Activated CD4-positive, alpha-beta memory T cell treated with anti-CD3 and anti-CD28 coated beads for 36 hours (primary cell): ENCODE measurements at regions of chr13 and their contacts with region 1.

Region 1: DNA sequence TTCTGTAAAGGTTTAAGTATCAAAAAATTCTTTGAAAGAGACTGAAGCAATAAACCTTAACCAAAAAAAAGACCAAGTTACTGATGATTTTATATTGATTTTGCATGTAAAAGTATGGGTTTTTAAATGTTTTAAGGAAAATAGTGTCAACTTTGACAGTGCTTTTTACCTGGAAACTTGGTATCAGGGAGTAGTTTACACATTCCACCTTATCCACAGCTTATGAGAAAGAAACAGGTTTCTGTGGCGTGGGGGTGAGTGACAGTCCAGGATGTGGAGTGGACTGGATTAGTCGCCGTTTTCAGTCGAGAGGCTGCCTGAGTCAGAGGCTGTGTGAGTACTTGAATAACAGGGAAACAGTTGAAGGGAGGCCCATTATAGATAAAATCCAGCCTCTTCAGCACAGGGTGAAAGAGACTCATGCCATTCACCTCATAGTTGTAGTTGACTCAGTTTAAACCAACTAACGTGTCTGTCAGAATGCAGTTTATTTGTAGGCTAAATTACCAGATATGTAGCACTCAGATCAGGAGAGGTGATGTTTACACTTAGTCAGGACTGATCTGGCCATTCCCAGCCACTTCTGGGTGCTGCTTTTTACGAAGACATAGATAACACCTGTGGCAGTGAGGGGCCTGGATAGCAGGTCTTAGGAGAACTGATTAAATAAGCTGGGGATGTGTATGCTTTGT is 595 bp upstream of the GPR183 start:
- DNase-seq: peak; percentile 91
- H3K4me3 Mint-ChIP-seq: peak overlapping the region; percentile 93
- H3K27ac Mint-ChIP-seq: peak overlapping the region; percentile 99
- H3K4me1 Mint-ChIP-seq: peaks cover 72% of the 10 kb centered on the region
- H3K27me3 Mint-ChIP-seq: no peaks in the 10 kb centered on the region

Region 2: DNA sequence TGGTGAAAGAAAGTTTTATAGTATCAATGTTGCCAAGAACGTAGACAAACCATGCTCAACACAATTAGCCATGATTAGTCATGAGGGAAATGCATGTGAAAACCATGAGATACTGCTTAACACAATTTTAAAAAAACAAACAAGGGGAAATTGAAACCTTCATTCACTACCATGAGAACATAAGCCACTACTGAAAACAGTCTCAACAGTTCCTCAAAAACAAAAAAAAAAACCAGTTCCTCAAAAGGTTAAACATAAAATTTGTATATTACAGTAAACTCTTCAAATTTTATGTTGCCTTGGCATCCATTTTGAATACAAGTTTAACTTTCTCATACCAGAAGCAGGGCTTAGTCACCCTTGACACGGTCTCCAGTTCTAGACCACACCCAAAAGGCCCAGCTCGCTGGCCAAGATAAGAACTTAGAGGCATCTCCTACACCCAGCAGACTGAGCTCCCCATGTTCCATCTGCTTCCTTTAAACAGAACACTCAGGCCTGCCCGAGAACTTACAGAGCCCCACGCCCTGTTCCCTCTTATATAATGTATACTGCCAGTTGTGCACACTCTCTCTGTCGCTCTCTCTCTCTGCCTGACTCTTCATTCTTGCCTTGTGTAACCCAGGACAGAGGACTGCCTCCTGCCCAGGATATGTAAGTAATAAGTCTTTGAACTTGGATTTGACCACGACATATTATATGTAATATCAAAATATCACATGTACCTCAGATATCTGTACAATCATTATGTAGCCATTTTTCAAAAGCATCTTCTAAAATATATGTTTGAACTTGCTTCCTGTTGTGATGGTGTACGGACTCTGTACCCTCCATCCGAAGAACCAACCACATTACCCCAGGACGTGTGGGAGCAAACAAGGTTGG is 798.3 kb before region 1 on chr13:
- CTCF ChIA-PET with region 1: no interaction called
- POLR2A ChIA-PET with region 1: no interaction called
- intact Hi-C with region 1: loop called (anchors 10 kb)
- DNase-seq: peak; percentile 78
- H3K4me3 Mint-ChIP-seq: peak overlapping the region; percentile 33
- H3K27ac Mint-ChIP-seq: peak overlapping the region; percentile 95
- H3K4me1 Mint-ChIP-seq: peaks cover 95% of the 10 kb centered on the region
- H3K27me3 Mint-ChIP-seq: no peaks in the 10 kb centered on the region

Region 3: DNA sequence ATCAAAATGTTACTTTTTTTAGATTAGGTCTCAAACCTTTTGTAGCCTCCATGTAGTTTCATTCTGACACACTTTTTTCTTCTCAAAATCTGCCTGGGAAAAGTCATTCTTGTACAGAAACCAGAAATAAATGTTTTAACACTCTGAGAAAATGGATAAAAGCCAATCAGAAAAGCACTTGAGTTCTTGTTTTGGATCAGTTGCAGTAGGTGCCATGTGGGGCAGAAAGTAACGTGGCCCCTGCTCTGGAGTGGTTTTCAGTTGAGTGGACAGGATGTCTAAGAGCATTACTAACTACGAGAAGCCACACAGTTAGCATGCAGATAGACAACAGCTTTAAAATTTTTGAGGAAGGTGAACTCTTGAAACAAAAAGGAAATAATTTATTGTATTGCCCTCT is 19.7 kb before region 1 on chr13:
- CTCF ChIA-PET with region 1: no interaction called
- POLR2A ChIA-PET with region 1: interaction called, 18 read pairs
- intact Hi-C with region 1: loop called (anchors 2 kb)
- DNase-seq: peak; percentile 87
- H3K4me3 Mint-ChIP-seq: no peak overlapping the region
- H3K27ac Mint-ChIP-seq: peak overlapping the region; percentile 80
- H3K4me1 Mint-ChIP-seq: peaks cover 85% of the 10 kb centered on the region
- H3K27me3 Mint-ChIP-seq: no peaks in the 10 kb centered on the region

Region 4: DNA sequence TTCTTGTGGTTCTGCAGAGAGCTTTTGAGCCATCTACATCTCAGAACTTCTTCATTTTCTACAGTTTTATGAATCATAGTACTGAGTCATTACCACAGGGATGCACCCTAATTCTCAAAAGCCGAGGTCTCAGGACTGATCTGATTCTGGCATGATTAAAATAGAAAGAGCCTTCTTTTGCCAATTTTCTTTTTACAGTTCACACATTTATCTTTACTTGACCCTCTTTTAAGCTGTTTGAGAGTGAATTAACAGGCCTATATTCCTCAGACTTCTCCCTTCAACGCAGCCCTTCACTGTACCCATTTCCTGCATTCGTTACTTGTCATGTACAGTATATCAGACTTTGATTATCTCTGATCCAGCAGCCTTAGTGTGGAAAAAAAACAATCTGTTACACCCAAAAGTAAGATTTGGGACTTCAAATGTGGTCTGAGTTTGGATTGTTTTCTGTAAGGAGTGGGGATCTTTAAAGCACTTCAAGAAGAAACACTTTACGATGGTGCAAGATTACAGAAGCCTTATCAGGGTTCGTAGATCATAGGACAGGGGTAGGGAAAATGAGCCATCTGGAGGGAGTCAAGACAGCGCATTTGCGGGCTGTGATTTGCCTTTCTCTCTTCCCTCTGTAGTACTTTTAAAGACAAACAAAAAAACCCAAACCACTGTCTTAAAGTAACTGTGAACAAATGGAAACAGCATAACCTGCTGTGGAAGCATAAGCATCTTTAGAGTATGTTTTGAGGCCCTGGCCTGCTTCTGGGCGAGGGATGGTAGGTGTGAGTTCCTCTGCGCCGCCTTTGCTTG is 14.7 kb after region 1 on chr13:
- CTCF ChIA-PET with region 1: interaction called, 6 read pairs
- POLR2A ChIA-PET with region 1: interaction called, 85 read pairs
- intact Hi-C with region 1: loop called (anchors 1 kb)
- DNase-seq: peak; percentile 53
- H3K4me3 Mint-ChIP-seq: peak overlapping the region; percentile 27
- H3K27ac Mint-ChIP-seq: peak overlapping the region; percentile 93
- H3K4me1 Mint-ChIP-seq: peaks cover 84% of the 10 kb centered on the region
- H3K27me3 Mint-ChIP-seq: no peaks in the 10 kb centered on the region

Region 5: DNA sequence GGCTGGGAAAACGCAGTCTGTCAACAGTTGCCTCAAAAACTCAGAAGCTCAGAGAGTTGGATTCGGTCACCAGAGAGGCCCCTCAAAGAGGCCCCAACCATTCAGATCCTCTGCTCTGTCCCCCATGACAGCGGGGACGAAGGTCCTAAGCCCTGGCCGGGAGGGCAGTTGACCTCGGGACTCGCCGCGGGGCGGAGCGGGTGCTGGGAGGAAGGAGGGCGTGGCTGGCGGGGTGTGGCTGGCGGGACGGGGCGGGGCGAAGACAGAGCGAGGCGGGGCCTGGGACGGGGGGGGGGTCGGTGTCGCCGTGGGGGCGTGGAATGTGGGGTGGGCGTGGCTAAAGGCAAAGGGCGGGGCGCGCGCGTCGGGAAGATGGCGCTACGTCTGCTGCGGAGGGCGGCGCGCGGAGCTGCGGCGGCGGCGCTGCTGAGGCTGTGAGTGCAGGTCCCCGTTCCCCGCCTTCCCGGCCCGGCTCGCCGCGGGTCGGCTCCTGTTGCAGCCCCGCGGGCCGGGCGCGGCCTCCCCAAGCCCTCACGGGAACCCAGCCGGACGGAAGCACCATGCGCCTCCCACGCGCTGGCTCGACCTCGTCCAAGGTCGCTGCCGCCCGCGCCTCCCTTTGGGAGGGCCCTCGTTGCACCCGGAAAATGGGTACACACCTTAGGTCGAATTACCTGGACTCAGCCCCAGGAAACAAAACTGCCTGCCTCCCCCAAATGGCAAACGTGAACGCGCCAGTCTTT is 298.7 kb after region 1 on chr13:
- CTCF ChIA-PET with region 1: no interaction called
- POLR2A ChIA-PET with region 1: no interaction called
- intact Hi-C with region 1: loop called (anchors 10 kb)
- DNase-seq: peak; percentile 93
- H3K4me3 Mint-ChIP-seq: peak within 1 kb of the TSS; percentile 85
- H3K27ac Mint-ChIP-seq: peak within 1 kb of the TSS; percentile 72
- H3K4me1 Mint-ChIP-seq: peaks cover 33% of the 10 kb centered on the region
- H3K27me3 Mint-ChIP-seq: no peaks in the 10 kb centered on the region